Naive thymus-derived CD8-positive, alpha-beta T cell (primary cell): ENCODE measurements at regions of chr17 and their contacts with region 1.

Region 1: DNA sequence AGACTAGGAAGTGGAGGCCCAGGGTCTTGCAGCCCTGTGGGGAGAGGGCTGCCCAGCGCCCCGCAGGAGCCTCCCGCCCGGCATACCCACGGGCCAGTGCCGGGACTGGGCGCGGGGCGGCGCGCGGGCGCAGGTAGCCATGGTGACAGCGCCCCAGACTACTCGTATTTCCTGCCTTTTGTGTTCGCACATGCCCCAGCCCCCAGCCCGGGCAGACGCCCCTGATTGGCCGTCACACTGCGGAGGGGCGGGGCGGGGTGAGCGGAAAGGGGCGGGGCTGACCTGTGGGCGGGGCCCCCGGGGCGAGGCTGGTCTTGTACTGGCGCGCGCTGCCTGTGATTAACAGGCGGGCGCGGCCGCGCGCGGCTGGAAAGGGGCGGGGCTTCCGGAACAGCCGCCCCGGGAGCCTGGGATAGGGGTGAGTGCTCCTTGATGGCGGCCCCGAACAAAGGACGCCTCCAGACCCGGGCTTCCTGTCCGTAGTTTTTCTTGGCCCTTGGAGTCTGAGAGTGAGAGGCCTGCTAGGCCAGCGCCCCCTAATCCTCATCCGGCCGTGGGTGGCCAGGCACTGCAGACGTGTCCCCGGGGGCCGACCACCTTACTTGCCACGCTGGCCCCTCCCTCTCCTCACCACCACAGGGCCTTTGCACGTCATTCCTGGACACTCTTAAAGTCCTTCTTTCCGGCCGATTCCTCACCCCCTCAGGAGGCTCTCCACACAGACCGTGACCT is 71.0 kb downstream of the RAI1 start:
- DNase-seq: peak; percentile 96 to 99 (median 98)
- ATAC-seq: peak; percentile 83 to 88
- H3K4me3 Mint-ChIP-seq: peak overlapping the region; percentile 79 to 97 (median 94)
- H3K27ac Mint-ChIP-seq: peak overlapping the region; percentile 91 to 100 (median 98)
- H3K4me1 Mint-ChIP-seq: peaks cover 41 to 92% (median 88%) of the 10 kb centered on the region in 4 donors
- H3K27me3 Mint-ChIP-seq: no peaks in the 10 kb centered on the region

Region 2: DNA sequence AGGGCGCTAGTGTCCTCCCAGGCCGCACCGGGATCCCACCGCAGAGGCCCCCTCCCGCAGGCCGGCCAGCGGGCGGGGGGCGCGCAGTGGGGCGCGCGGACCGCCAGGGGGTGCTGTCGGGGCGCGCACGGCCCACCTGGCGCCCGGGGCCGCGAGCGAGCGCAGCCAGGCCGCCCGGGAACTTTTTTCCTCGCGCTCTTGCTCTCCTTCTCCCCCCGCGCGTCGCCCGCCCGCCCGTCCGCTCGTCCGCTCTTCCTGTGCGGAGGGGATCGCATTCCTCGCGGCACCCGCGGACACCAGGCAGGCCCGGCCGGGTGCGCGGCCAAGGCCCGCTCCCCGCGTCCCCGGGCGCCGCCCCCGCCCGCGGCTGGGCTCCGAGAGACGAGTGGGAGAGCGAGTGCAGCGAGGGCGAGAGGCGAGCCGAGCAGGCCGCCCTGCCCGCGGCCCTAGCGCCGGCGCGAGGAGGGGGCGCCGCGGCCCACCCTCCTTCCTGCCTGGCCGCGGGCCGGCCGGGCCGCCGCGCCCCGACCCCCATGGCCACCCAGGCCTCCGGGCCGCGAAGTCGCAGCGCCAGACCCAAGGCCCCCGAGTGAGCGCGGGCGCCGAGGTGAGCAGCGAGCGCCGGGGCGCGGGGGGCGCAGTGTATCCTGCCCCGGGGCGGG is 70.9 kb before region 1 on chr17 and contains the start of gene RAI1:
- POLR2A ChIA-PET with region 1: interaction called, 11 read pairs
- DNase-seq: peak; percentile 59 to 87 (median 78)
- ATAC-seq: peak; percentile 61 to 63
- H3K4me3 Mint-ChIP-seq: peak within 1 kb of the TSS; percentile 70 to 93 (median 86)
- H3K27ac Mint-ChIP-seq: peak within 1 kb of the TSS in 8 of 10 donors; percentile 48 to 93 (median 88)
- H3K4me1 Mint-ChIP-seq: peaks cover 19 to 51% (median 43%) of the 10 kb centered on the region in 4 donors
- H3K27me3 Mint-ChIP-seq: no peaks in the 10 kb centered on the region
- polyA plus RNA-seq, gene RAI1: 1.5 to 4.0 (median 2.3) TPM

Region 3: DNA sequence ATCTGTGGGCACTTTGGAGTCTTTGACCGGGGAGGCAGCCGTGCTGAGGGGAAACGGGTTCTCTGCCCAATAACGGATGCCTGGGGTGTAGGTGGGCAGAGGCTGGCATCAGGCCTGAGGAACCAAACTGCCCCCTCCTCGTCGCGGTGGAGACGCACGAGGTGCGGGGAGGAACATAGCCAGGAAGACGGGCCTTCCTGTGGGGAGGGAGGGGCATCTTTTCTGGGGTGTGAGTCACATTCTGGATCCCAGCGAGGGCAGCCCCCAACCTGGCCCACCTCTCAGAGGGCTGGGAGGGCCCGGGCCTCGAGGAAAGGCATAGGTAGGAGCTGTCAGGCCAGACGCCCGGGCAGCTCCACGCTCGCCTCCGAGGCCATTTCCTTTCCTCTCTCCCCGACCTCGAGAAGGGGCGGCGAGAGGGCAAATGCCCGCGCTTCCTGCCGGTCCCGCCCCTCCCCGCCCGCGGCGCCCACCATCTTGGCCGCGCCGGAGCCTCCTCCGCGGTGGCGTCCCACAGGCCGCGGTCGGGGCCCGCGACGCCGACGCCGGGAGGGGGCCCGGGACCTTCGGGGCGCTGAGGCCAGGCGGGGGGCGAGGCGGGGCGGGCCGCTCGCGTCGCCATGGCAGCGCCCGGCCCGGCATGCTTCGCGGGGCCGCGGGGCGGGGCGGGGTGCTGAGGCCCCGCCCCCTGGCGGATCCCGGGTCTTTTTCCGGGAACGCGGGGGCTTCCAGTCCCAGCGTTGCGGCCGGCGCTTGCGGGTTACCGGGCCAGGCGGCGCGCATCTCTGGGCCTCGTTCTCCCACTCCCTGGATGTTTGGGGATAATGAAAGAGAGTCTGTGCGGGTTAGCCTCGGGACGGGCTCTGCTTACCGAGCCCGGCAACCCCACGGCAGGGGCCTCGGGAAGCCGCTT is 57.8 kb before region 1 on chr17:
- POLR2A ChIA-PET with region 1: interaction called, 33 read pairs
- DNase-seq: peak; percentile 47 to 87 (median 76)
- ATAC-seq: peak; percentile 68 to 73
- H3K4me3 Mint-ChIP-seq: peak overlapping the region; percentile 81 to 96 (median 91)
- H3K27ac Mint-ChIP-seq: peak overlapping the region; percentile 94 to 100 (median 99)
- H3K4me1 Mint-ChIP-seq: peaks cover 51 to 87% (median 73%) of the 10 kb centered on the region in 4 donors
- H3K27me3 Mint-ChIP-seq: no peaks in the 10 kb centered on the region

Region 4: DNA sequence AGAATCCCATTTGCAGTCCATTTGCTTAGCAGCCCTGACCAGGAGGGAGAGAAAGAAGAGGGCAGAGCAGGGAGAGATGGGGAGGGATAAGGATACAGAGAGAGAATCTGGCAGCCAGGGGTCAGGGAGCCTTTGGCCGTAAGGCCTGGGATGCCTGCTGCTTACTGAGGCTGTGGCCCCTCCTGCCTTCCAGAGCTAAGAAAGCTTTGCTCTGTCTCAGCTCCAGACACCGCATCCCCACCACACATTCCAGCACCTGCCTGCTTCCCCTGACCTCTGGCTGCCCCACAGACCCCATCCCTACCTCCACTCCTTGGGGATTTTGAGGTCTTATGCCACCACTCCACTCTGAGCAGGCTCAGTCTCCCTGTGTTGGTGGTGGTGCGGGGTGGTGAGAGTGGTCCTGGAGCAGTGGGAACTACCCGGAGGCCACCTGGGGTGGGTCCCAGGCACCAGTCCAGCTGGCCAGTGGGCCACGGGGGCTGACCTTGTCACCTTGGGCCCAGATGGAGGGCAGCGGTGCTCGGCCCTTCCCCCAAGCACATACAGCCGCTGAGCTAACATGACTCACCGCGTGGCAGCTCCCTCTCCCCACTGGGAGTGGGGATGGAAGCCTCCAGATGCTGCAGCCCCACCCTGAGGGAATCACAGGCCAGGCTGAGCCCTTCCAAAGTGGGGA is 12.7 kb before region 1 on chr17:
- POLR2A ChIA-PET with region 1: interaction called, 52 read pairs
- DNase-seq: no peak
- ATAC-seq: no peak
- H3K4me3 Mint-ChIP-seq: peak overlapping the region in 7 of 10 donors; percentile 17 to 74 (median 62)
- H3K27ac Mint-ChIP-seq: peak overlapping the region in 9 of 10 donors; percentile 84 to 94 (median 91)
- H3K4me1 Mint-ChIP-seq: peaks cover 33 to 72% (median 56%) of the 10 kb centered on the region in 4 donors
- H3K27me3 Mint-ChIP-seq: no peaks in the 10 kb centered on the region

Region 5: GRCh38 chr17:17783116-17783824 is 31.0 kb after region 1 on chr17:
- POLR2A ChIA-PET with region 1: interaction called, 55 read pairs
- DNase-seq: peak; percentile 42 to 80 (median 60)
- ATAC-seq: peak; percentile 61 to 66
- H3K4me3 Mint-ChIP-seq: peak overlapping the region; percentile 78 to 94 (median 91)
- H3K27ac Mint-ChIP-seq: peak overlapping the region in 9 of 10 donors; percentile 31 to 95 (median 81)
- H3K4me1 Mint-ChIP-seq: peaks cover 28 to 46% (median 32%) of the 10 kb centered on the region in 4 donors
- H3K27me3 Mint-ChIP-seq: no peaks in the 10 kb centered on the region

Region 6: GRCh38 chr17:17792551-17793377 is 40.5 kb after region 1 on chr17:
- POLR2A ChIA-PET with region 1: interaction called, 55 read pairs
- DNase-seq: peak; percentile 40 to 88 (median 69)
- ATAC-seq: peak; percentile 89 to 92
- H3K4me3 Mint-ChIP-seq: peak overlapping the region; percentile 60 to 81 (median 76)
- H3K27ac Mint-ChIP-seq: peak overlapping the region; percentile 77 to 96 (median 94)
- H3K4me1 Mint-ChIP-seq: peaks cover 19 to 43% (median 31%) of the 10 kb centered on the region in 4 donors
- H3K27me3 Mint-ChIP-seq: no peaks in the 10 kb centered on the region

Region 7: GRCh38 chr17:17805575-17805974 is 53.3 kb after region 1 on chr17:
- POLR2A ChIA-PET with region 1: no interaction called
- DNase-seq: no peak
- ATAC-seq: no peak
- H3K4me3 Mint-ChIP-seq: peak overlapping the region in 1 of 10 donors; percentile 39
- H3K27ac Mint-ChIP-seq: peak overlapping the region in 5 of 10 donors; percentile 9 to 92 (median 84)
- H3K4me1 Mint-ChIP-seq: peaks cover 7 to 14% (median 11%) of the 10 kb centered on the region in 4 donors
- H3K27me3 Mint-ChIP-seq: no peaks in the 10 kb centered on the region